Endothelial cell of umbilical vein (primary cell): ENCODE measurements at regions of chr13 and their contacts with region 1.

Region 1: DNA sequence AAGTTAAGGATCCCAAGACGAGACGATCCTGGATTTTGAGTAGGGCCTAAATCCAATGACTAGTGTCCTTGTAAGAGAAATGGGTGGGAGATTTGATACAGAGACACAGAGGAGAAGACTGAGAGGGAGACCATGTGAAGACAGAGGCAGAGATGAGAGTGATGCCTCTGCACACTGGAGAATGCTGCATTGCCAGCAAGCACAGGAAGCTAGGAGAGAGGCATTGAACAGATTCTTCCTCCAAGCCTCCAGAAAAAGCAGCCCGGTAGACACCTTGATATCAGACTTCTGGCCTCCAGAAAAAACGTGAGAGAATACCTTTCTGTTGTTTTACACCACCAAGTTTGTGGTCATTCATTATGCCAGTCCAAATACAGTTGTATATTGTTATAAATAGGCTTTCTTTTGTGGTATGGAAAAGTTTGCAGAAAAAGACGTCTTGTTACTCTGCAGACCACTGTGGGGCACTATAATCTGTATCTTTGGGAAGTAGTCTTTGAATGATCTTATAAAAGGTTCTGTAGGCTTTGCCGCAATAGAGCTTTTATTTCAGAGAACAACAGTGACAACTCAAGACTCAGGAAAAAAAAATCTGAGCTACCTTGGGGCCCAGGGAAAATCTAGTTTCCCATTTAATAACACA is 17.9 kb upstream of the RFC3 start:
- DNase-seq: peak; percentile 67
- H3K4me3 ChIP-seq: no peak overlapping the region
- H3K27ac ChIP-seq: no peak overlapping the region
- H3K4me1 ChIP-seq: no peaks in the 10 kb centered on the region
- H3K27me3 ChIP-seq: peaks cover 0 to 7% of the 10 kb centered on the region in 2 experiments
- CTCF ChIP-seq: peak; percentile 24 to 37
- POLR2A ChIP-seq: no peak

Region 2: GRCh38 chr13:33787051-33787591 is 12.9 kb before region 1 on chr13:
- CTCF ChIA-PET with region 1: interaction called, 28 read pairs
- POLR2A ChIA-PET with region 1: no interaction called
- dilution Hi-C with region 1: no loop called
- intact Hi-C with region 1: no loop called
- DNase-seq: no peak
- H3K4me3 ChIP-seq: no peak overlapping the region
- H3K27ac ChIP-seq: no peak overlapping the region
- H3K4me1 ChIP-seq: no peaks in the 10 kb centered on the region
- H3K27me3 ChIP-seq: peaks cover 0 to 4% of the 10 kb centered on the region in 2 experiments
- CTCF ChIP-seq: no peak
- POLR2A ChIP-seq: no peak

Region 3: DNA sequence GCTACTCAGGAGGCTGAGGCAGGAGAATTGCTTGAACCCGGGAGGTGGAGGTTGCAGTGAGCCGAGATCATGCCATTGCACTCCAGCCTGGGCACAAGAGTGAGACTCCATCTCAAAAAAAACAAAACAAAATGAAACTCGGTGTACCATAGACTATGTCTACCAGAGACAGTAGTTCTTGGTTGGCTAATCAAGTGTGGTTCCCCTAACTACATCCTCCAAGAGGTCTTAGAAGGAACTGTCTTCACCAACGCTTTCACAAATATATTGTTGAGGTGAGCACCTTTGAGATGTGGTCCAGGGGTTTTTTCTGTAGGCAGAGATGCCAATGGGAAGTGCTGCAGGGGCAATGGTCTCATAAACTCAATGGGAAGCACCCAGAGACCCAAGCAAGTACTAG is 65.9 kb after region 1 on chr13:
- CTCF ChIA-PET with region 1: interaction called, 26 read pairs
- POLR2A ChIA-PET with region 1: no interaction called
- dilution Hi-C with region 1: no loop called
- intact Hi-C with region 1: no loop called
- DNase-seq: no peak
- H3K4me3 ChIP-seq: no peak overlapping the region
- H3K27ac ChIP-seq: no peak overlapping the region
- H3K4me1 ChIP-seq: no peaks in the 10 kb centered on the region
- H3K27me3 ChIP-seq: no peaks in the 10 kb centered on the region
- CTCF ChIP-seq: no peak
- POLR2A ChIP-seq: no peak

Region 4: DNA sequence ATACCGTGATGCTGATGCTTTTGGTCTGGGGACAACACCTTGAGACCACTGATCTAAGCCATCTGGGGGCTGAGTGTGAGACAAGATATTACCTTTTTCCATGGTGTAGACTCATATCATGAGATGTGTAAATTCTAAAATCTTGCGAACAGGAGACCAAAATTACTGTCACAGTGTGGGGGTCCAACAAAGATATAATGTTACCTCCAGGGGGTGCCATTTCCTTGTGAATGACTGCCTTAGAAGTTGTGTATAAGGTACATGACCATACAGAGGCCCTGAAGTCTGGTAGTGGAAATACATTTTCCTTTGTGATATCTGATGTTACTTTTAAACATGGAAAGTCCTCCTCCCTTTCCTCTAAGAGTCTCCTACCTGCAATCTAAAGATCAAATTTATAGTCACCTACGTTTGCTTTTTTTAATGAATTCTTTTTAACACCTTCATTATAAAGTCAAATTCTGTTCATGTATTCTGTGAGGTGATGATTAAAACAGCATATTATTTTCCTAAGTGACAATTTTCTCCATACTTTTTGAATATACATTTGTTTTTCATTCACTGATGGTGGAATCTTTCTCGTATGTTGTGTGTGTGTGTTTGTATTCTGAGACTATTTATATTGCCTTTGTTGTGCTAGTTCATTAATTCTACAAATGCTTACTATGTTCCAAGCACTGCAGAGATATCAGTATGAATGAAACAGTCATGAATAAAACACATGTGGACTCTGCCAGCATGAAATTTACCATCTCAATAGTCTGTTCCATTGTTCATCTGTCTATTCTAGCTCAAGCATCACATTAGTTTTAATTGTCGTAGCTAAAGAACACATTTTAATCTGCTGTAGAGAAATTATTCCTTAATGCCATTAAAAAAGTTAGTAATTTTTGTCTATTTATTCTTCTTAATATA is 131.6 kb after region 1 on chr13:
- CTCF ChIA-PET with region 1: interaction called, 28 read pairs
- POLR2A ChIA-PET with region 1: no interaction called
- dilution Hi-C with region 1: no loop called
- intact Hi-C with region 1: no loop called
- DNase-seq: peak; percentile 39
- H3K4me3 ChIP-seq: no peak overlapping the region
- H3K27ac ChIP-seq: no peak overlapping the region
- H3K4me1 ChIP-seq: no peaks in the 10 kb centered on the region
- H3K27me3 ChIP-seq: no peaks in the 10 kb centered on the region
- CTCF ChIP-seq: peak in 1 of 2 donors; percentile 52
- POLR2A ChIP-seq: no peak

Region 5: GRCh38 chr13:35164324-35164932 is 1364.4 kb after region 1 on chr13:
- CTCF ChIA-PET with region 1: interaction called, 60 read pairs
- POLR2A ChIA-PET with region 1: no interaction called
- dilution Hi-C with region 1: no loop called
- intact Hi-C with region 1: no loop called
- DNase-seq: peak; percentile 59
- H3K4me3 ChIP-seq: no peak overlapping the region
- H3K27ac ChIP-seq: no peak overlapping the region
- H3K4me1 ChIP-seq: no peaks in the 10 kb centered on the region
- H3K27me3 ChIP-seq: no peaks in the 10 kb centered on the region
- CTCF ChIP-seq: peak; percentile 25 to 26
- POLR2A ChIP-seq: no peak